AG04450 (cell line): ENCODE measurements at regions of chr2 and their contacts with region 1.

Region 1: GRCh38 chr2:1750933-1751766 is 6.8 kb upstream of the PXDN start:
- DNase-seq: peak; percentile 72
- H3K4me3 ChIP-seq: no peak overlapping the region
- H3K27ac ChIP-seq: no peak overlapping the region
- H3K27me3 ChIP-seq: peaks cover 4% of the 10 kb centered on the region
- CTCF ChIP-seq: peak; percentile 95

Region 2: DNA sequence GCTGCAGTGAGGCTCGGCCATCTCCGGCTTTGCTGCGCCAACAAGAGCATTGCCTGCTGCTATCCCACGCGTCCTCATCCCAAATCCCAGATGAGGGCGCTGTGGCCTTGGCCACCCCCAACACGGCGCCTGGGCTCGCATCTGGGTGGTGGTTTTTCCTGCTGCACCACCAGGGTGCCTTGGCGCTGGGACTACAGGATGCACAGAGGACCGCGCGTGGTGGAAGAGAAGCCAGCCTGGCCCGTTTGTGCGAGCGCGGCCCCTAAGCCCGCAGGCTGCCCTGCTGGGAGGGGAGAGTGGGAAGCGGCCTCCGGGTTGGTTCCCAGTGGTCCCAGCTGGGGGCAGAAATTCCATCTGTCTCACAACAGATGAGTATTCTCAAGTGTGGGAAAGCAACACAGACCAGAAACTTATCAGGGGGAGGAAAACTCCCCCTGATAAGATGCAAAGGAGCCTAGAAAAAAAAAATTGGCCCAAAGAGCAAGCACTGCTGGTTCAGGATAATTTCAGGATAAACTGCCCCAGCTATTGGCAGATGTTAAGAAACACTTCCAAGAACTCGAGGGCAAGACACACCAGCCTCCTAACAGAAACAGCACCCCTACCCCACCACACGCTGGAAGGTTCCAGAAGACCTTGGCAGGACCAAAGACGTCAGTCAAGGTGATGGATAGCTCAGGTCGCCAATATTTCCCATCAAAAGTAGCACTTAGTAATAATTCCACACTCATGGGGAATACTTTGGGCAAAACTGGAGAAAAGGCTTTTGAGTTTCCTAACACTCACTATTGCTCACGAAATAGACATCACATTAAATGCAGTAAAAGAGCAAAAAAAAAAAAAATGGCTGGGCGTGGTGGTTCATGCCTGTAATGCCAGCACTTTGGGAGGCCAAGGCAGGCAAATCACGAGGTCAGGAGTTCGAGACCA is 158.9 kb before region 1 on chr2:
- CTCF ChIA-PET with region 1: interaction called, 22 read pairs
- POLR2A ChIA-PET with region 1: no interaction called
- DNase-seq: peak; percentile 48
- H3K4me3 ChIP-seq: no peak overlapping the region
- H3K27ac ChIP-seq: peak overlapping the region; percentile 11
- H3K27me3 ChIP-seq: no peaks in the 10 kb centered on the region
- CTCF ChIP-seq: peak; percentile 67

Region 3: GRCh38 chr2:1685957-1686784 is 65.0 kb before region 1 on chr2:
- CTCF ChIA-PET with region 1: interaction called, 15 read pairs
- POLR2A ChIA-PET with region 1: interaction called, 15 read pairs
- DNase-seq: no peak
- H3K4me3 ChIP-seq: no peak overlapping the region
- H3K27ac ChIP-seq: peak overlapping the region; percentile 52
- H3K27me3 ChIP-seq: no peaks in the 10 kb centered on the region
- CTCF ChIP-seq: no peak

Region 4: DNA sequence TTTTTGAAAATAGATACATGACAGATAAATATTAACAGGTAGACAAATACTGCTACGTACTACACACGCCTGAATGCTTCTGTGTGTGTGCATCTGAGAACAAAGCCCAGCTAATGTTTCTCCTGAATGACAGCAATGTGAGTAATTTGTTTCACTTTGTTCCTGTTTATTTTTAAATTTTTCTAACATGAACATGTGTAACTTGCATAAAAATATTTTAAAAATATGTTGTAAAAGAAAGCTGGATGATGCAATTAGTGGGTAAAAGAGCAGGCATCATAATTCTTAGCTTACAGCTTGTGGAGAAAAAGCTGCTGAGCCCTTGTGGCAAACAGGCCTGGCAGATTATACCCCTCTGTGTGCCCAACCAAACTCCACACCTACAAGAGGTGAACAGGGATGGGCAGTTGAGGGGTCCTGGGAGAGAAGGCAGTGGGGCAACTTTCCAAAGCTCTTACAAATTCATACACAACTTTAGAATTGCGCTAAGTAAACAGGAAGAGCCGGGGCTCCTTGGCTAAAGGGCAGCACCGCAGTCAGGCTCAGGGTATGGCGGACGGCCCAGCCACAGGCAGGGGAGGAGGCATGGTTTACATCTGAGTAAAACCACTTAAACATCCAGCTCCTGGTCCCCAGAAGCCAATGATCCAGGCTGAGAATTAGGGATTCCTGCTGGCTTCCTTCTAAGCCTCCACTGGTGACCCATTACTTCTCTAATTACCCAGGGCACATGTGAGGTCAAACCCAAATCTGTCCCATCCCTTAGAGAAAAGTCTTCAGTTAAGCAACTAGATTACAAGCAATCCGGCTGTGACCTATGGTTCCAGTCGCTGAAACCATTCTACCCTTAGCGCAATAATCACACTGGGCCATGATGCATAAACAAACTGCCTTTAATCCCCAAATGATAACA is 20.9 kb before region 1 on chr2:
- CTCF ChIA-PET with region 1: interaction called, 53 read pairs
- POLR2A ChIA-PET with region 1: interaction called, 36 read pairs
- DNase-seq: peak; percentile 84
- H3K4me3 ChIP-seq: peak overlapping the region; percentile 49
- H3K27ac ChIP-seq: peak overlapping the region; percentile 99
- H3K27me3 ChIP-seq: no peaks in the 10 kb centered on the region
- CTCF ChIP-seq: no peak

Region 5: GRCh38 chr2:1769703-1770422 is 18.7 kb after region 1 on chr2:
- CTCF ChIA-PET with region 1: interaction called, 11 read pairs
- POLR2A ChIA-PET with region 1: no interaction called
- DNase-seq: no peak
- H3K4me3 ChIP-seq: no peak overlapping the region
- H3K27ac ChIP-seq: no peak overlapping the region
- H3K27me3 ChIP-seq: peaks cover 12% of the 10 kb centered on the region
- CTCF ChIP-seq: peak; percentile 85

Region 6: DNA sequence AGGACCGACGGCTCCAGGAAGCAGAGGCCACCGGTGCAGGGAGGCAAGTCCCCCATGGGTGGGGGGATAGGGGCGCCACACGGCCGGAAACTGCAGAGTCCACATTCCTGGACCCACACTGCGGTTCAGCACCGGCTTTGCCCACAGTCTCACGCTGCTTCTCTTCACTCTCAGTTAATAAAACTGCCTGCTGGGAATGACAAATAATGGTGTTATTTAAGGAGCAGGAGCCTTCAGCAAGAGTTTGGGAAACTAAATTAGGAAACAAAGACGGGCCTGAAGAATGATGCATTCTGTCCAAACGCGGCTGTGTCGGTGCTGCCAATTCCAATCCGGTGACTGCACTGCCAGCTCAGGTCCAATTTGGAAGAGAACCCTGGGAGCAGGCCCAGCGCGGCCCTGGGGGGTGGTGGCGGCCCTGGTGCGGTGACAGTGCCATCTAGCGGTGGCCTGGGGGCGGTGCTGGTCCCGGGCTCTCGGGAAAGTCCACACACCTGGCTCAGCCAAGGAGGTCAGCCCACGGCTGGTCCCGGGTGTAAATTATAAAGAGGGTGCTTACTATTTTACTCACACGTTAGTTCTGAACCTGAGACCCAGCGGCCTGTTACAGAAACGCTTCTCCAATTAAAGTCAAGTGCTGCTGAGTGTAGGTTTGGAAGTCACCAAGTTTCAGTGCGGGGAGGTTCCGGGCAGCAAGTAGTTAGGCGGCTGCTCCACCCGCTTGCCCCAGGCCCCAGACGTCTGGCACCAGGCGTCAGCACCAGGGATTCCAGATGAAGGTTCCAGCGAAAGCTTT is 66.3 kb after region 1 on chr2:
- CTCF ChIA-PET with region 1: interaction called, 22 read pairs
- POLR2A ChIA-PET with region 1: interaction called, 5 read pairs
- DNase-seq: peak; percentile 93
- H3K4me3 ChIP-seq: peak overlapping the region; percentile 12; the same call in 1 of the 2 replicates
- H3K27ac ChIP-seq: peak overlapping the region; percentile 93
- H3K27me3 ChIP-seq: no peaks in the 10 kb centered on the region
- CTCF ChIP-seq: peak; percentile 98